Activated T-helper 2 cell treated with anti-CD3 and anti-CD28 coated beads, Interferon-gamma antibody, Interleukin-2, Interleukin-4, amounts not matched to agents 10 μg/mL and 5 μg/mL and 100 μg/mL, durations not matched to agents 14 hours and 24 hours and 36 hours (primary cell): ENCODE measurements at regions of chr5 and their contacts with region 1.

Region 1: DNA sequence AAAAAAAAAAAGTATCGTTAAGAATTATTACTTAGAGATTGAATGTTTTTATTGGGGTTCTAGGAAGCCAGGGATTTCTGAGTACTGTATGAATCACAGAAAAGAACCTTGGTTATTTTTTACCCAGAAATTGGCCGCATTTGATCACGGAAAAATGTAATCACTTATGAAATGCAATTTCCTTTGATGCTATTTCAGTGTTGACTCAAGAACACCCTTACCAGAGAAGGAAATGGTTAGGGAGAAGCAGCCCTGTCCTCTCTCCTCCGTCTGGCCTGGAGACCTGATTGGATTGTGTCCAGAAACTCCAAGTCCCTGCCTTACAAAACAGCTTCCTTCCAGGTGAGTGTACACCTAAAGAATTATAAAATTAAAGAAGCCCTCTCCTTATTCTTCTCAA is 116.7 kb downstream of the MED10 start:
- DNase-seq: no peak
- H3K4me3 Mint-ChIP-seq: peak overlapping the region; percentile 65
- H3K27ac Mint-ChIP-seq: peak overlapping the region; percentile 81
- H3K4me1 Mint-ChIP-seq: peaks cover 23% of the 10 kb centered on the region
- H3K27me3 Mint-ChIP-seq: no peaks in the 10 kb centered on the region

Region 2: GRCh38 chr5:5523066-5523505 is 738.6 kb before region 1 on chr5:
- intact Hi-C with region 1: loop called (anchors 10 kb)
- DNase-seq: peak; percentile 41
- H3K4me3 Mint-ChIP-seq: no peak overlapping the region
- H3K27ac Mint-ChIP-seq: peak overlapping the region; percentile 53
- H3K4me1 Mint-ChIP-seq: peaks cover 26% of the 10 kb centered on the region
- H3K27me3 Mint-ChIP-seq: no peaks in the 10 kb centered on the region

Region 3: DNA sequence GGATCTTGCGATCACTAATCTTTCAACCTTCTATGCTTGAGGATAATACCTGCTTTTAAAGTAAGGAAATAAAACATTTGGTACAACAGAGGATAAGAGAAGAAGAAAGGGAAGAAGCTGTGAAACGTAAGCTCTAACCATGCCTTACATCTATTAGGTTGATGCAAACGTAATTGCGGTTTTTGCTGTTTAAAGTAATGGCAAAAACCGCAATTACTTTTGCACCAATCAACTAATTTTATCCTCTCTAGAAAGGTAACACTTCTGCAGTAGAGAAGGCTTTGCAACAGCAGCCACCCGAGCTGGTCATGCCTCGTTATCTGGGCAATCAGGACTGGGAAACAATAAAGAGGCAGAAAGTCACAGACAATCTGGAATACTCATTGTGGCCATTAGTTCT is 107.5 kb before region 1 on chr5:
- intact Hi-C with region 1: no loop called
- DNase-seq: no peak
- H3K4me3 Mint-ChIP-seq: no peak overlapping the region
- H3K27ac Mint-ChIP-seq: no peak overlapping the region
- H3K4me1 Mint-ChIP-seq: no peaks in the 10 kb centered on the region
- H3K27me3 Mint-ChIP-seq: no peaks in the 10 kb centered on the region

Region 4: DNA sequence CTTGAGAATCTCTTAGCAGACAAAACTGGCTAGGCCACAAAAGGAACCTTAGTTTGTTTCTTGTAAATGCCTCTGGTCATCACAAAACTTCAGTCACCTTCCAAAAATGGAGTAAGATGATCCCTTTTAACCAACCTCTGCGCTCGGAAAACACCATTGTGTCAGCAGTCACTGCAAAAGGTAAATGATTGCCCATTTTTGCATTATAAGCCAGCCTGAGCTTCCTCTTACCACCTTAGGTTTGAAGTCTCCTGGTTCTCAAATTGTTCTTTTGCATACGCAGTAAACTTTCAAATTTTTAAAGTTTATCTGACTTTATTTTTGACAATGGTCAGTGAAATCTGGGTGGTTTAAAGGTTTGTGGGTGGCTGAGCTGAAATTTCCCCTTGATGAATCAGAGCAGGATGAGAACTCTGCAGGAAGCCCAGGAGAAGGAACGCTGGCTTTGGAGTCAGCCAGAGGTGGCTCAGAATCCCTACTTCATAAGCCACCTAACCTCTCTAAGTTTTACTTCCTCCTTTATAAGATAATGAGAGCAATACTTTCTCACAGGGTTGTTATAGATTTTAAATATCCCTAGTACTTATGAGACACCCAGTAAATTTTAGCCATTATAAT is 14.7 kb before region 1 on chr5:
- intact Hi-C with region 1: no loop called
- DNase-seq: no peak
- H3K4me3 Mint-ChIP-seq: no peak overlapping the region
- H3K27ac Mint-ChIP-seq: no peak overlapping the region
- H3K4me1 Mint-ChIP-seq: peaks cover 3% of the 10 kb centered on the region
- H3K27me3 Mint-ChIP-seq: no peaks in the 10 kb centered on the region

Region 5: DNA sequence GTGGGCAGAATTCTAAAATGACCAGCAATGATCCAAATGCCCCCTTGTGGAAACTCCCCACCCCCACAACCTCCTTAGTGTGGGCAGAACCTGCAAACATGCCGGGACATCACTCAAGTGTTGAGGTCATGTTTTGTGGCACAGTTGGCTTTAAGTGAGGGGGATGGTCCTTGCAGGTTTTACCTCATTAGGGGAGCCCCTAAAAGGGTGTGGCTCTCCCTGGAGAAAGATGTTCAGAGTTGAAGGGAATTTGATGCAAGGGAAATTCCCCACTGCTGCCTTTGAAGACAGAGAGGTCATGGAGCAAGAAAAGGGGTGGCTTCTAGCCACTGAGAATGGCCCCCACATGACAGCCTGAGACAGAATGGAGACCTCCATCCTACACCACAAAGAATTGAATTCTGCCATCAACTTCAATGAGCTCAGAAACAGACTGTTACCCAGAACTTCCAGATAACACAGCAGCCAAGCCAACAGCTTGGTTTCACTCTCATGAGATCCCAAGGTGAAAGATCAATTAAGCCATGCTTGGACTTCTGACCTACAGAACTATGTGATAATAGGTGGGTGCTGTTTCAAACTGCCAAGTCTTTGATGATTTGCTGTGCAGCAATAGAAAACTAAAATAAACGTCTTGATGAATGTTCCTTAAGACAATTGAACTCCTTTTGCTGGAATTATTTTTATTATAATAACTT is 13.3 kb after region 1 on chr5:
- intact Hi-C with region 1: loop called (anchors 1 kb)
- DNase-seq: no peak
- H3K4me3 Mint-ChIP-seq: peak overlapping the region; percentile 33
- H3K27ac Mint-ChIP-seq: peak overlapping the region; percentile 89
- H3K4me1 Mint-ChIP-seq: peaks cover 28% of the 10 kb centered on the region
- H3K27me3 Mint-ChIP-seq: no peaks in the 10 kb centered on the region

Region 6: GRCh38 chr5:7096294-7096693 is 834.6 kb after region 1 on chr5:
- intact Hi-C with region 1: no loop called
- DNase-seq: no peak
- H3K4me3 Mint-ChIP-seq: no peak overlapping the region
- H3K27ac Mint-ChIP-seq: no peak overlapping the region
- H3K4me1 Mint-ChIP-seq: no peaks in the 10 kb centered on the region
- H3K27me3 Mint-ChIP-seq: no peaks in the 10 kb centered on the region